ENCODE measurements at regions of chr7 and their contacts with region 1.

Region 1: DNA sequence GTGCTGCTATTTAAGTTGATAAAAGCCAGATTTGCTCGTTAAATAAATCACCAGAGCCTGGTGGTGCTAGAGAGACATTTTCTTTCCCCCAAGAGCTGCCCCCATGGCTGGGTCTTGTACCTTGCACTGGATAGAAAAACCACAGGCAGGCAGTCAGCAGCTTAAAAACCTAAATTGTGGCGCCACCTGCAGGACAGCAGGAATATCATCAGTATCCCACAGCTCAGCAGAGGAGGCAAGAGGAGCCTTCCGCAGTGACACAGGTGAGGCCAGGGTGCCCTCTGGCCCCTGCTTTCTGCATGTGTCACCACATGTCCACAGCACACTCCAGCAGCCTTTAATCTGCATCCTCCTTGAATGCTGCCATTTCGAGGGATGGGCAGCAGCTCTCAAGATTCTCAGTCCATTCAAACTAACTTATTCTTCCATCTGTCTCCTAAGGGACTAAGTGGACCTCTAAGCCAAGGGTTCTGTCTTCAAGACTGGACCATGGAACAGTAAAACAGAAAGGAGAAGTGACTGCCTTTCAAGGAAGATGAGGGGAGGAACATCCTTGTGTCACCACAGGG is 4.5 kb upstream of the PLXNA4 start:
- DNase-seq: peak in 3 of 4 donors; percentile 51 to 86 (median 73)
- ATAC-seq: peak; percentile 79
- H3K4me3 ChIP-seq: no peak overlapping the region
- H3K27ac ChIP-seq: no peak overlapping the region
- H3K4me1 ChIP-seq: peaks cover 0 to 16% of the 10 kb centered on the region in 2 donors
- H3K27me3 ChIP-seq: peaks cover 20 to 40% of the 10 kb centered on the region in 2 donors
- CTCF ChIP-seq: peak; percentile 67 to 74

Region 2: GRCh38 chr7:132298790-132299189 is 282.0 kb before region 1 on chr7:
- intact Hi-C with region 1: no loop called
- DNase-seq: no peak
- ATAC-seq: peak; percentile 64
- H3K4me3 ChIP-seq: no peak overlapping the region
- H3K27ac ChIP-seq: no peak overlapping the region
- H3K4me1 ChIP-seq: no peaks in the 10 kb centered on the region
- H3K27me3 ChIP-seq: no peaks in the 10 kb centered on the region
- CTCF ChIP-seq: no peak

Region 3: GRCh38 chr7:132318352-132319318 is 262.2 kb before region 1 on chr7:
- intact Hi-C with region 1: loop called (anchors 5 to 10 kb)
- DNase-seq: peak; percentile 80 to 92 (median 87)
- ATAC-seq: peak; percentile 98
- H3K4me3 ChIP-seq: no peak overlapping the region
- H3K27ac ChIP-seq: no peak overlapping the region
- H3K4me1 ChIP-seq: peaks cover 0 to 8% of the 10 kb centered on the region in 2 donors
- H3K27me3 ChIP-seq: peaks cover 0 to 44% of the 10 kb centered on the region in 2 donors
- CTCF ChIP-seq: peak; percentile 69 to 86

Region 4: GRCh38 chr7:132386201-132386681 is 194.6 kb before region 1 on chr7:
- intact Hi-C with region 1: no loop called
- DNase-seq: no peak
- ATAC-seq: peak; percentile 52
- H3K4me3 ChIP-seq: no peak overlapping the region
- H3K27ac ChIP-seq: no peak overlapping the region
- H3K4me1 ChIP-seq: peaks cover 3 to 6% of the 10 kb centered on the region in 2 donors
- H3K27me3 ChIP-seq: peaks cover 0 to 29% of the 10 kb centered on the region in 2 donors
- CTCF ChIP-seq: no peak